AG04449 (cell line): ENCODE measurements at regions of chr19 and their contacts with region 1.

Region 1: GRCh38 chr19:12965017-12965811 is 4.2 kb upstream of the DAND5 start:
- DNase-seq: no peak
- H3K4me3 ChIP-seq: peak overlapping the region; percentile 63
- CTCF ChIP-seq: peak; percentile 100

Region 2: DNA sequence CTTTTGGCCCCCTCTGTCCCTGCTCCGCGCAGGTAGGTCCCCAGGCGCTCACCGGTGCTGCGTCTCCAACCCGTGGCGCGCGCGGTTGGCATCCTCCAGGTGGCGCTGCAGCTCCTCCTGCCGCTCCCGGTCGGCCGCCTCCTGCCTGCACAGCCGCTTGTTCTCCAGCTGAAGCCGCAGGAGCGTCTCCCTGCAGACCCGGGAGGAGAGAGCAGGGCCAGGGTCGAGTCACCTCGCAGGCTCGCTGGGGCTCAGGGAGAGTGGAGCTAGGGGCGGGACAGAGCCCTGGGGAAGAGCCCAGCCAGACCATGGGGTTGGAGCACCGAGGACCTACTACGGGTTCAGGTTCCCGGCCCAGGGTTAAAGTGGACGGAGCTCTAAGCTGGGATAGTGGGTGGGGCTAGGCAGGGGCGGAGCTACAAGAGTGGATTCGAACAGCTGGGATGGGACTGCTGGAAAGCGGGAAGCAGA is 199.1 kb before region 1 on chr19:
- CTCF ChIA-PET with region 1: interaction called, 11 read pairs
- POLR2A ChIA-PET with region 1: no interaction called
- DNase-seq: no peak
- H3K4me3 ChIP-seq: peak overlapping the region; percentile 68
- CTCF ChIP-seq: peak; percentile 99

Region 3: DNA sequence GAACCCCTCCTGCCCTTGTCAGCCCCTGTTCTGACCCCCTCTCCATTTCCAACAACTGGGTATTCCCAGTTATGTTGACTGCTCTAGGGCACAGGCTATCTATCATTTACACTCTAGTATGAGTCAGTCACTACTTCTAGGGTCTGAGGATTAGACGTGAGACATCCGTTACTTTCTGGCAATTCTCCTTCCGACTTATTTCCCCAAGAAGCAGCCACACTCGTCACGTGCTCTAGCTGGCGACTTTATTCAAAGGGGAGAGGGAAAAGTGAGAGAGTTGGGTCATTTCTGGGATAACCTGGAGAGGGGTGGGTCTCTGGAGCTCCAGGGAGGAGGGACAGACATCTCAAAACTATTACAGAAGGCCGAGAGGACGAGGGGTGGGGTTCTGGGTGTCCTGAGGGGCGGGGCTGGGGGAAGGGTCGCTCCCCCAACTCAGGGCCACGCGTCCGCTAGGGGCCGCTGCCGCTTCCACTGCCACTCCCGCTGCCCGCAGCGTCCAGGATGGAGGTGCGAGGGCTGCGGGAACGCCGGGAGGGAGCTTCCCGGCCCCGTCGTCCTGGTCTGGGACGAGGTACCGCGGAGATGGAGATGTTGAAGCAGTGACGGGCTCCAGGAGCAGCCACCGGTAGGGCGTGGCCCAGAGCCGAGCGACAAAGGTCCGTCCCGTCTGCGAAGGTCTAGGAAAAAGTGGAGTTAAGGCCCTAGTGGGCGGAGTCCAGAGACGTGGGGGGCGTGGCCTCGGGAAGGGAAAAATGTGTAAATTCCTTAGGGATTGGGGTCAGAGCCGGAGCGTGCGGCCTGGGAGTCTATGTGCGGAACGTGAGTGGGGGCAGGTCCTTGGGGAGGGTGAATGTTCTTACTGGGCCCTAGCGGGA is 139.7 kb before region 1 on chr19:
- CTCF ChIA-PET with region 1: no interaction called
- POLR2A ChIA-PET with region 1: no interaction called
- DNase-seq: no peak
- H3K4me3 ChIP-seq: peak overlapping the region; percentile 12; the same call in 1 of the 2 replicates
- CTCF ChIP-seq: peak; percentile 46

Region 4: DNA sequence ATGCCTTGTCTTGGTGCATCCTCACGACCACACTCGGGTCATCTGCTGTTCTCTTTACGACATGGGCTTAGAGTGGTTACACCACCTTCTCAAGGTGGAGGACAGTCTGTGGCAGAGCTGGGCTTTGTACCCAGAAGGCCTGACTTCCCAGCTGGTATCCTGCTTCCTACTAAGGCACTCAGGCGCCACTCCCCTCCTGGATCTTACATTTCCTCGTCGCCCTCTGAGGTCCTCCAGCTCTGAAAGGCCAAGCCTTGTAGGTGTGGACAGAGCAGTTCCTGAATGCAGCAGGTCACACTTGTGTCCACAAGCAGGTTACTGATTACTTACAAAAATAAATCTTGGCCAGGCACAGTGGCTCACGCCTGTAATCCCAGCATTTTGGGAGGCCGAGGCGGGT is 58.0 kb before region 1 on chr19:
- CTCF ChIA-PET with region 1: no interaction called
- POLR2A ChIA-PET with region 1: no interaction called
- DNase-seq: no peak
- H3K4me3 ChIP-seq: no peak overlapping the region
- CTCF ChIP-seq: no peak

Region 5: GRCh38 chr19:12983542-12984142 is 18.4 kb after region 1 on chr19:
- CTCF ChIA-PET with region 1: interaction called, 11 read pairs
- POLR2A ChIA-PET with region 1: no interaction called
- DNase-seq: no peak
- H3K4me3 ChIP-seq: peak overlapping the region; percentile 52
- CTCF ChIP-seq: peak; percentile 87

Region 6: DNA sequence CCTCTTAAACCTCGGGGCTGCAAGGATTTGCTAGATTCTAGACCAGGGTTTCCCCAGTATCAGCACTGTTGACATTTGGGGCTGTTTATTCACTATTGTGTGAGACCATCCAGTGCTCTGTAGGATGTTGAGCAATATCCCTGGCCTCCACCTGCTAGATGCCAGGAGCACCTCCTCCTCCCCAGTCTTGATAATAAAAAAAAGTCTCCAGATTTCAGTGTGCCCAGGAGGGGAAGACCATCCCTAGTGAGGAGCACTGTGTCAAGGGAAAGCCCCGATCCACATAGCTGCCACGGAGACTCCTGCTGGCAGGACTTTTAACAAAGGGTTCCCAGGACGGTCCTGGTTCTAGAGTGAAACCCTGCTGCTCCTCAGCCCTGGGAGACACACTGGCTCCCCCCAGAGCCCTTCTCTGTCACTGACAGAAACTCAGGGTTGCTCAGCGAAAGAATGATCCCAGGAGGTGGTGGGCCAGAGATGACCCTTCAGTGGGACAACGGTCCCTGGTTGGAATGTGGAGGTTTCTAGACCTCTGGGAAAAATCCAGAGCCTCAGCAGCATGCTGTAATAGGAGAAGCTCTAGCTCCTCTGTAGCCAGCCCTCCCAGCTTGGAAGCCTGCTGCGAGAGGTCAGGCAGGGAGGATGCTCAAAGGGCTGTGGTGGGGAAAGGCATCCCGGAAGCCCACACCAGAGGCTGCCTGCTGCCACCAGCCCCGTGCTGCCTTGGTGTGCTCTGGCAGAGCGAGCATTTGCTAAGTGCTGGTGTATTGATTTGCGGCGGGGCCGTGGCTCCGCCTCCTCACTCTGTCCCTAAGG is 117.2 kb after region 1 on chr19:
- CTCF ChIA-PET with region 1: interaction called, 13 read pairs
- POLR2A ChIA-PET with region 1: no interaction called
- DNase-seq: no peak
- H3K4me3 ChIP-seq: no peak overlapping the region
- CTCF ChIP-seq: peak; percentile 58

Region 7: DNA sequence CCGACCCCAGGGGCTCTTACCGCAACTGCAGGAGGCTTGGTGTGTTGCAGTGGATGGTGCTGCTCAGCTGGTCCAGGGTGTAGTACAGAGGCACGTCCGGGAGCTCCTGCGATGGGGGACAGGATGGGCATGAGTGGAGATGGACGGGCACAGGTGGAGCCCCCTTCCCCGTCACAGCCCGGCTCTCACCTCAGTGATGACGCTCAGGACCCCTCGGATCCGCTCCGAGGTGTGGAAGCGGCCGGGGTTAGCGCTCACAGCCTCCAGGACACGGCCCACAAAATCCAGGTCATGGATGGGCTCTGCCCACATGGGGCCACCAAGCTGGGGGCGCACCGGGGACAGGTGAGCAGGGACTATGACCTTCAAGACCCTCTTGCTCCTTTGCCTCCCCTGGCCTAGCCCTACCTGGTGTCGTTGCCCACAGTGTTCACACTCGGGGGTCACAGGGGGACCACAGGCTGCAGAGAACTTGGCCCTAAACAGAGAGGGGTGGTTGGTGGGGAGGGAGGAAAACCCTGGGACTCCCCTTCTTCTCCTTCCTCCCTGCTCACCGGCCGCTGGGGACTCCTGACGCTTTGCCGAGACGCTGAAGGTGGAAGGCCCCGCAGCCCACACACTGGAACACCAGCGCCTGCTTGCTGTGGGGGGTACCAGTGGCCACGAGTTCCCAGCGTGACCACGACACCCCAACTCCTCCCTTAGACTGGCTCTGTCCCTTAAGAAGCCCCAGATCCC is 144.3 kb after region 1 on chr19:
- CTCF ChIA-PET with region 1: interaction called, 19 read pairs
- POLR2A ChIA-PET with region 1: no interaction called
- DNase-seq: no peak
- H3K4me3 ChIP-seq: no peak overlapping the region
- CTCF ChIP-seq: no peak

Region 8: DNA sequence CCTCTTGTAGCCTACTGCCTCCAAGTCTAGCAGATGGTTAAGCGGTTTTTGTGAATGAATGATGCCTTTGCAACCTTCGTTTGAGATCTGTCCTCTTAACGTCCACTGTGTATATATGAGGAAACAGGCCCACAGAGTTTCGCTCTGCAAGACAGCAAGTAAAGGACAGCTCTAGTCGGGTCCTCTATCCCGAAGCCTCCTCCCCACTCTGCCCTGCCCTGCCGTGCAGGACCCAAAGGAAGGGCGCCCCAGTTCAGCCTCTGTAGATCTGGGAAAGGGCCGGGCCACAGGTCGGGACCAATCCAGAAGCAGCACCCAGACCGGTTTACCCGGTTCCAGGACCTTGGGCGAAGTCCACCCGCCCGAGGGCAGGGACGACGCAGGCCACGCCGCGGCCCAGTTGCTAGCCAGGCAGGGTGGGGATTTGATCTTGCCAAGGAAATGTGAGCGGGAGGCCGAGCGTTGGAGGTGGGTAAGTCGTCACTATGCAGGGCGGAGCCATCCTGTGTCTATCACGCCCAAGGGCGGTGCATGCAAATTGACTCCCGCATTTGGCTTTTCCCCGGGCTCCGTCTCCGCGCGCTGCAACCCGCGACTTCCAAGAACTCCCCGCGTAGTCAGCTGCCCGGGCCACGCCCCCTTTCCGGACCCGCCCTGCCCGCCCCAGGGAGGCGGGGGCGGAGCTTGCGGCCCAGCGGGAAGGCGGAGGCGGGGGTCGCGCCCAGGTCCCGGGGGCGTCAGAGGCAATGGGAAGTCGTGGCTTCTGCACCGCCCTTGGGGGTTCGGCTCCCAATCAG is 197.5 kb after region 1 on chr19:
- CTCF ChIA-PET with region 1: interaction called, 19 read pairs
- POLR2A ChIA-PET with region 1: no interaction called
- DNase-seq: peak; percentile 87
- H3K4me3 ChIP-seq: peak overlapping the region; percentile 40
- CTCF ChIP-seq: no peak